Transverse colon (tissue), 4 donors: ENCODE measurements at regions of chr22 and their contacts with region 1.

Region 1: DNA sequence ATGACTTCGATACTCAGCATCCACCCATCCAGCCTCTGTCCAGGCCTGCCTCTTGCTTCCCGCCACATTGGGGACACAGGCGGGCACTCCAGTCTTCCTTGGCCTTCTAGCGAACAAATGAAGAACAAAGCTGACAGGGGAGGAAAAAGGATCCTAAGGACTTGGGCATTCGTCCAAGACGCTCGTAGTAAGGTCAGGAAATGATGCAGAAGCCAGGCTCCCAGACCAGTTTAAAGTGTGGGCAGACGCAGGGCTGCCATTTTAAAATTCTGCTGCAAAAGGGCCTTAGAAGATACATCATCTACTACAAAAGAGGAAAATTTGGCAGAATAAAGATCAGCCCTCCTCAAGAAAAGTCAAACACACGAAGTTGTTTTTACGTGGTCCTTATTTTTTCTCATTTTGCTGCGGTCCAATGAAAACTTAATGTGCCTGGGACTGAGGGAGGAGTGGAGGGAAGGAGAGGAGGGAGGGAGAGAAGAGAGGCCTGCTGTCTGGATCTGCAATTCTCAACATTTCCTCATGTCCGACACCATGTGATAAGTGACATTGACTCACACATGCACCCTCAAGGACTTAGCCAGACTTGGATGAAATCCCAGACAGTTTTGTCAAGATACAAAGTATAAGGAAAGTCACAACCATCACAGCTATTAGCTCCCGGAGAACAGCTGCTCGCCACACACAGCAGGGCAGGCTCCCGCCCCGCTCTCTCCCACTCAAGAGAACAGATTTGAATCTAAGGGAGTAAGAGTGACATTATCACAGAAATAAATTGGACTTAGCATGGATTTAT is 5.7 kb downstream of the DNAL4 start:
- DNase-seq: no peak
- H3K4me3 ChIP-seq: no peak overlapping the region
- H3K27ac ChIP-seq: peak overlapping the region; percentile 40 to 73 (median 58)
- H3K4me1 ChIP-seq: peaks cover 0 to 19% (median 13%) of the 10 kb centered on the region in 4 donors
- H3K27me3 ChIP-seq: no peaks in the 10 kb centered on the region
- CTCF ChIP-seq: no peak
- EP300 ChIP-seq: no peak
- POLR2A ChIP-seq: no peak

Region 2: DNA sequence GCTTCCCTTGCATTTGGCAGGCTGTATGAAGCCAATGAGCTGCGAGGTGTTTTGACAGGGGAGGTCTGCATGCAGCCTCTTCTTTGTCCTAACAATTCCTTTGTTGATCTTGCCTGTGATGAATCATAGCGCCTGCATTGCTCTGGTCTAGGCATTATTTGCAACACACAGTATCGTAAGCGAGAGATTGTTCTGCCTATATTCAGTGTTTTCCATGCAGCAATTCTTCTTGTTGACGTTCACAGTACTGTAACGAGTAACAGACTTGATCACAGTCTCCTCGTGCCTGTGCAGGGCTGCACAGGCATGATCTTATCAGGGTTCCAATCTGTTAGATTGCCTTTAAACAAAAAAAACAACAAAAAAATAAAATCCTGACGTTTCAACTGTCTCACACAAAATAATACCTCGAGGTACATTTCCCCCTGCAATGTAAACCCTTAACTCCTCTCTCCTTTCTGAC is 1544.1 kb after region 1 on chr22:
- in situ Hi-C with region 1: no loop called
- intact Hi-C with region 1: loop called (anchors 5 kb)
- DNase-seq: no peak
- H3K4me3 ChIP-seq: no peak overlapping the region
- H3K27ac ChIP-seq: peak overlapping the region in 1 of 4 donors; percentile 20
- H3K4me1 ChIP-seq: peaks cover 0 to 2% (median under 1%) of the 10 kb centered on the region in 4 donors
- H3K27me3 ChIP-seq: no peaks in the 10 kb centered on the region
- CTCF ChIP-seq: no peak
- EP300 ChIP-seq: no peak
- POLR2A ChIP-seq: no peak